BJ (cell line): ENCODE measurements at regions of chr11 and their contacts with region 1.

Region 1: GRCh38 chr11:73236854-73237253 is 18.8 kb downstream of the P2RY2 start:
- DNase-seq: no peak
- H3K4me3 ChIP-seq: no peak overlapping the region
- H3K27me3 ChIP-seq: no peaks in the 10 kb centered on the region
- CTCF ChIP-seq: peak; percentile 59

Region 2: DNA sequence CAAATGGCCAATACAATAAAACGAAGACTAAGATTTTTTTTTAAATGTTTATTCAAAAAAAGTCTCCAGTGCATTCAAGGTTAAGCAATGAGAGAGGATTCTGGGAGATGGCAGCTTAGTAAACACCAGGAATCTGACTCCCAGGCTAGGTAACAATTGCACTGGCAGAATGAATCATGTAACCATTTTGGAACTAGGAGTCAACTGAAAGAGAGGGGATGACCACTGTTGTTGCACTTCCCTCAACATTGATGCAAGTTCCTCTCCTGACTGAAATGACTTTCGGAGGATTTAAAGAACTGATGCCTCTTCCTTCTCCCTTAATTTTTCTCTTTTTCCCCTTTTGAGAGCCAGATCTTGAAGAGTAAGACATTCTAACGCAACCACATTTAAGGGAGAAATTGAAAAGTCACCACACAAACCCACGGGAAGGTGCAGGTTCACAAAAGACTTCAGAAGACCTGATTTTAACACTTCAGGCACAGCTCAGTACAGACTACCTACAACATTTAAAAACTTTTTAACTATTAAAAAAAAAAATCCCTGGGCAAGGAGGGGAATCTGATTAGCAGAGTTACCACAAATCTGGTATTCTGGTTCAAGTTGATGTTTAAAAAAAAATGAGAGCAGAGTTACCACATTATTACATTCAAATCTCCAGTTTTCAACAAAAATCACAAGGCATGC is 151.5 kb before region 1 on chr11:
- CTCF ChIA-PET with region 1: no interaction called
- POLR2A ChIA-PET with region 1: no interaction called
- DNase-seq: no peak
- H3K4me3 ChIP-seq: no peak overlapping the region
- H3K27me3 ChIP-seq: no peaks in the 10 kb centered on the region
- CTCF ChIP-seq: no peak

Region 3: DNA sequence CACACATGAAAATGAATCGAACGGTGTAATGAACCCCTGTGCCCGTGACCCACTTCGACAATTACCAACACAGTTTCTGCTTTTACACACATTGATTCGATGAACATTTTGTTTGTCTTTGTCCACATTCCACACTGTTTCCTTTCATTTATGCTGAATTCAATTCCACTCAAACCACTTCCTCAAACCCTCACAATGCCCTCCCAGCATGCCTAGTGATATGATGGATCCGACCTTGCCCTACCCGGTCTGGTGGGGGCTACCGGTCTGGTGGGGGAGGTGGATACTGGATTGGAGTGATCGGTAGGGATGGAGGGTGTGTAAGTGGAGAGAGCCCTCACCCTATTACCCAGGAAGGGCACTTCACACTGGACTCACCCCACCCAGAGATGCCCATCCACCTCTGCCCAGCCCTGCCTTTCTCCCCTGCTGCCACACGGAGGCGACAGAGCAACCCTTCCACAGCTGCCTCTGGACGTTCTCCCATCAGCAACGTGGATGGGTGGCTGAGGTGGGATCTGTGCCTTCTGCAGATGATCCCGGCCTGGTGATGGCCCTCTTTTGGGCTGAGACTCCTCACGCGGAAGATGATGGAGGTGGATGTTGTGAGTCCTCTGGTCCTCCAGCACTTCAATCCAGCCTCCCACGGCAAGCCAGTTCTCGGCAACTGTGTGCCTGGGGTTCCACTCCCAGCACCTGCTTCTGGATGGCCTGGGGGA is 51.7 kb before region 1 on chr11:
- CTCF ChIA-PET with region 1: interaction called, 89 read pairs
- POLR2A ChIA-PET with region 1: no interaction called
- DNase-seq: no peak
- H3K4me3 ChIP-seq: no peak overlapping the region
- H3K27me3 ChIP-seq: no peaks in the 10 kb centered on the region; the same call in 1 of the 2 replicates
- CTCF ChIP-seq: peak; percentile 90

Region 4: GRCh38 chr11:73201249-73201648 is 35.6 kb before region 1 on chr11:
- CTCF ChIA-PET with region 1: no interaction called
- POLR2A ChIA-PET with region 1: no interaction called
- DNase-seq: no peak
- H3K4me3 ChIP-seq: no peak overlapping the region
- H3K27me3 ChIP-seq: peaks cover 3% of the 10 kb centered on the region; the same call in 1 of the 2 replicates
- CTCF ChIP-seq: no peak